Heart left ventricle (tissue), 16 donors: ENCODE measurements at regions of chr10 and their contacts with region 1.

Region 1: GRCh38 chr10:101031128-101031795 is at the starts of genes PDZD7 and SFXN3:
- DNase-seq: peak; percentile 97 to 99 (median 98)
- ATAC-seq: peak; percentile 87 to 91 (median 90)
- H3K4me3 ChIP-seq: peak within 1 kb of the TSS; percentile 57 to 94 (median 72)
- H3K27ac ChIP-seq: peak within 1 kb of the TSS; percentile 87 to 100 (median 95)
- H3K4me1 ChIP-seq: peaks cover 0 to 39% (median 20%) of the 10 kb centered on the region in 12 donors
- H3K27me3 ChIP-seq: no peaks in the 10 kb centered on the region
- CTCF ChIP-seq: no peak
- POLR2A ChIP-seq: peak in 1 of 2 donors; percentile 71
- total RNA-seq, gene PDZD7: 0.09 to 0.97 (median 0.35) TPM in 8 of 9 donors, not detected in the other
- total RNA-seq, gene SFXN3: 12.1 to 37.4 (median 17.8) TPM

Region 2: GRCh38 chr10:100986952-100987750 is 44.1 kb before region 1 on chr10 and contains the starts of genes MRPL43 and TWNK:
- intact Hi-C with region 1: loop called in 2 of 10 experiments (anchors 5 kb)
- DNase-seq: peak; percentile 80 to 90 (median 88)
- ATAC-seq: peak; percentile 83 to 93 (median 91)
- H3K4me3 ChIP-seq: peak within 1 kb of the TSS; percentile 69 to 97 (median 87)
- H3K27ac ChIP-seq: peak within 1 kb of the TSS; percentile 44 to 89 (median 82)
- H3K4me1 ChIP-seq: peaks cover 0 to 31% (median 23%) of the 10 kb centered on the region in 12 donors
- H3K27me3 ChIP-seq: no peaks in the 10 kb centered on the region
- CTCF ChIP-seq: no peak
- POLR2A ChIP-seq: peak in 1 of 2 donors; percentile 23
- total RNA-seq, gene MRPL43: 44.8 to 108 (median 55.9) TPM
- total RNA-seq, gene TWNK: 4.7 to 7.6 (median 5.8) TPM

Region 3: GRCh38 chr10:100998991-100999741 is 32.1 kb before region 1 on chr10:
- intact Hi-C with region 1: loop called in 1 of 10 experiments (anchors 5 kb)
- DNase-seq: peak; percentile 87 to 93 (median 89)
- ATAC-seq: peak; percentile 17 to 75 (median 62)
- H3K4me3 ChIP-seq: peak overlapping the region; percentile 62 to 99 (median 89)
- H3K27ac ChIP-seq: peak overlapping the region; percentile 93 to 100 (median 100)
- H3K4me1 ChIP-seq: peaks cover 8 to 66% (median 49%) of the 10 kb centered on the region in 12 donors
- H3K27me3 ChIP-seq: no peaks in the 10 kb centered on the region
- CTCF ChIP-seq: peak; percentile 92 to 99 (median 97)
- POLR2A ChIP-seq: peak; percentile 60 to 96

Region 4: DNA sequence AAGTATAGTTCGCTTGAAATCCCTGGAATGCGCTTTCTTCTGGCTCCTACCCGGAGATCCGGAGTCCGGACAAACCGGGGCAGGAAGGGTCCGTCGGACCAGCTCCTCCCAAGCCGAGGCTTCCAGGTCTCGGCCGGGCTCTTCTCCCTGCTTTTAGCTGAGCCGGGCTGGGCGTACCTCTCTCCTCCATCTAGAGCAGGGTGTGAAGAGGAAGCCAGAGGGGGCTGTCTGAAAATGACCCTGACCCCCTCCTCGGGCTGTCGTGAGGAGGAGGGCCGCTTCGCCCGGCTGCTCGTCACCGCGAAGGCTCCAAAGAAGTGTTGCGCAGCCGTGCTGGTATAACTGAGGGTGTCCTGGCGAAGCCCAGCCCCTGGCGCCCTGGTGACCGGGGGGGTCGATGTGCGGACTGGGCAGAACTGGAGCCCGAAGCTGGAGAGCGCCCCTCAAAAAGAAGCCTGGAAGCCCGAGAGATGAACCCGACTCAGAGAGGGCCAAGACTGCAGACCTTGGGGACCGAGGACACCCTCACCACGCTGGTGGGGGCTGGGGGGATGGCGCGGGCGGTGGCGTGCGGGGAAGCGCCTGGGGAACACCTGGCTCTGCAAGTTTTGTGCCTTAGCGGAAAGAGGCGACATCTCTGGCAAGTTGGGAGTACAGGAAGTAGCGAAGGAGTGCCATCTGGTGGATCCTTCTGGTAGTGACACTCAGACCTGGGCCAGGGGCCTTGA is 36.3 kb after region 1 on chr10:
- intact Hi-C with region 1: loop called in 1 of 10 experiments (anchors 5 kb)
- DNase-seq: peak; percentile 71 to 75 (median 73)
- ATAC-seq: peak in 3 of 4 donors; percentile 36 to 55 (median 52)
- H3K4me3 ChIP-seq: peak overlapping the region; percentile 37 to 66 (median 57)
- H3K27ac ChIP-seq: peak overlapping the region in 11 of 12 donors; percentile 1 to 99 (median 85)
- H3K4me1 ChIP-seq: peaks cover 0 to 70% (median 38%) of the 10 kb centered on the region in 12 donors
- H3K27me3 ChIP-seq: peaks cover 0 to 34% (median 8%) of the 10 kb centered on the region in 9 donors
- CTCF ChIP-seq: peak; percentile 86 to 95 (median 92)
- POLR2A ChIP-seq: no peak